ENCODE measurements at regions of chr17 and their contacts with region 1.

Region 1: GRCh38 chr17:2592971-2593820 is at the start of gene PAFAH1B1:
- DNase-seq: peak; percentile 77 to 95 (median 88)
- H3K4me3 ChIP-seq: peak within 1 kb of the TSS; percentile 65 to 100 (median 97)
- H3K27ac ChIP-seq: peak within 1 kb of the TSS; percentile 93 to 100 (median 99)
- H3K27me3 ChIP-seq: no peaks in the 10 kb centered on the region
- CTCF ChIP-seq: peak in 50 of 56 donors; percentile 16 to 73 (median 46)
- total RNA-seq, gene PAFAH1B1: 167 to 390 (median 327) TPM

Region 2: GRCh38 chr17:2401426-2402221 is 191.6 kb before region 1 on chr17:
- intact Hi-C with region 1: loop called (anchors 5 to 10 kb)
- DNase-seq: peak; percentile 100
- H3K4me3 ChIP-seq: peak overlapping the region; percentile 67 to 100 (median 96)
- H3K27ac ChIP-seq: peak overlapping the region; percentile 87 to 100 (median 97)
- H3K27me3 ChIP-seq: no peaks in the 10 kb centered on the region
- CTCF ChIP-seq: peak in 6 of 56 donors; percentile 5 to 29 (median 8)

Region 3: GRCh38 chr17:2484876-2485275 is 108.3 kb before region 1 on chr17:
- intact Hi-C with region 1: loop called (anchors 5 kb)
- DNase-seq: peak in 1 of 10 donors; percentile 5
- H3K4me3 ChIP-seq: no peak overlapping the region
- H3K27ac ChIP-seq: peak overlapping the region in 21 of 59 donors; percentile 8 to 96 (median 38)
- H3K27me3 ChIP-seq: no peaks in the 10 kb centered on the region
- CTCF ChIP-seq: no peak

Region 4: DNA sequence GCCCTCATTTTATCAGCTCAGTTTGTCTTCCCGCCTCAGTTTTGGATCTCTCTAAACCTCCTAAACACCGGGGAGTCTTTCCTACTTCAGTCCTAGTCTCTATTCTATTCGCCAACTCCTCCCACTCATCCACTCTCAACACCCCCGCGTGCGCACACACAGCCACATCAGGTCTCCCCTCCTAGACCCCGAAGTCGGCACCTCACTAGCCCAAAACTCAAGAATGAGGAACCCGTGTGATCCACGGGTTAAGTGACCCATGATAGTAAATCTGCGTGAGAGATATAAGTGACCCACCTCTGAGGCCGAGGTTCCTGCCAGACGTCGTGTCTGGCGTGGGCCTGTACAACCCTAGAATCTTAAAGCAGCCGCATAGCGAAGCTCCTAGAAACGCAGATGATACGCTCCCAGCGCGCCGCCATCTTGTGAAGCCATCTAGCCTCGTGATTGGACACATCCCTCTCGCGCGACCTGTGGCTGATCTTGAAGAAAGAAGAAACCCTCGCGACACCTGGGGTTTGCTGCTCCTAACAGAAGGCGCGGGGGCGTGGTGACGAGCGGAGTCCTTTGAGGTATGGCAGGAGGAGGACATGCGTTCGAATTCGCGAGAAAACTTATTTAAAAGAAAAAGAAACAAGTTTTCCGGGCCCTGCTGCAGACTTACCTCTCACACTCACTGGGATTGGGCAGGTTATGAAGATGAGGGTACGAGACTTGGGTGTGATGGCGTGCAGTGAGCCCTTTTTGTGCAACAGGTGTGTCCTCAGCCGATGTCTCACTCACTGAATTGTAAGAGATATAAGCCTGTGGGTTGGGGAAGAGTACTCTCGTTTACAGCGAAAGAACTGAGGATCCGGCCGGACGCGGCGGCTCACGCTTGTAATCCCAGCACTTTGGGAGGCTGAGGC is 81.5 kb before region 1 on chr17 and contains the start of gene METTL16:
- intact Hi-C with region 1: loop called in 1 of 2 experiments (anchors 5 kb)
- DNase-seq: peak; percentile 91 to 99 (median 96)
- H3K4me3 ChIP-seq: peak within 1 kb of the TSS; percentile 42 to 94 (median 80)
- H3K27ac ChIP-seq: peak within 1 kb of the TSS; percentile 76 to 98 (median 92)
- H3K27me3 ChIP-seq: no peaks in the 10 kb centered on the region
- CTCF ChIP-seq: peak in 35 of 56 donors; percentile 6 to 45 (median 25)
- total RNA-seq, gene METTL16: 19.6 to 52.4 (median 31.1) TPM

Region 5: DNA sequence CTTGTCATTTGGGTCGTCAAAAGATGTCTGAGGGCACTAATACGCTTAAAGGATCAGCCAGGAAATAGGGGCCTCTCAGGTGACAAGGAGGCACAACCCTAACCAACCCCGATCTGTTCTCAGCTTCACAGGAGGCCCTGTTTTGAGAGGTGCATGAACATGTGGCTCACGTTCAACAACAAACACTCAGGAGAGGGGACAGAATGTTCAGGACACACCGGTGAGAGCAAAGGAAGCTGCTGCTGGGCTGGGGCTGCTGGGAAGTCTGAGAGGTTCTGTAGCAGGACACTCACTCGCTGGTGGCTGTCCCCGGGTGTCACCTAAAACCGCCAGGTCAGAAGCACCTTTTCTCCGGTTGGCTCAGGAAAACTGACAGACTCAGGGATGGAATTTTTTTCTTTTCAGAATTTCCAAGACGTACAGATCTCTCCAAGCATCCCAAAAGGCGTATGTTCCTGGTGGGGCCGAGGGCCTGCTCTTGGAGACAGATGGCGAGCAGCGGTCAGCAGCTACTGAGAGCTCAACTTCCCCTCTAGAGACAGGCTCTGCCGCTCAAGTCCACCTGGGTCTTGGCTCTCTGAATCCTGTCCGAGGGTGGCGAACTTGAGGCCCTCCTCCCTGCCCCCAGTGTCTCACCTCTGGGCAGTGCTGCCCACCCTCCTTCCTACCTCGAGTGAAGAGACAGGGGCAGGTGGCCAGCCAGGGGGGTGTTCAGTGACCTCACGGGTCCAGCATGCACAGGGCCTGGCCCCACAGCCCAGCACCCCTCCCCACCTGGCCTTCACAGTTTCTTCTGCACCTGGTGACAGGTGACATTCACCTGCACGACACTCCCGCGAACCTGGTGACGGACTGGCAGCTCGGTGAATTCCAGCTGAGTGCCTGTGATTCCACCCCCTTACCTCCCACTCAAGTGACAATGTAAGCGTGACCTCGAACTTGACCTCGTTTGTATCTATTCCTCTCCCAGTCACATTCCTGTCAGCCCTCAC is 95.5 kb after region 1 on chr17:
- intact Hi-C with region 1: loop called in 1 of 2 experiments (anchors 5 kb)
- DNase-seq: peak in 3 of 10 donors; percentile 17 to 39 (median 26)
- H3K4me3 ChIP-seq: no peak overlapping the region
- H3K27ac ChIP-seq: peak overlapping the region in 41 of 59 donors; percentile 1 to 72 (median 34)
- H3K27me3 ChIP-seq: no peaks in the 10 kb centered on the region
- CTCF ChIP-seq: no peak

Region 6: DNA sequence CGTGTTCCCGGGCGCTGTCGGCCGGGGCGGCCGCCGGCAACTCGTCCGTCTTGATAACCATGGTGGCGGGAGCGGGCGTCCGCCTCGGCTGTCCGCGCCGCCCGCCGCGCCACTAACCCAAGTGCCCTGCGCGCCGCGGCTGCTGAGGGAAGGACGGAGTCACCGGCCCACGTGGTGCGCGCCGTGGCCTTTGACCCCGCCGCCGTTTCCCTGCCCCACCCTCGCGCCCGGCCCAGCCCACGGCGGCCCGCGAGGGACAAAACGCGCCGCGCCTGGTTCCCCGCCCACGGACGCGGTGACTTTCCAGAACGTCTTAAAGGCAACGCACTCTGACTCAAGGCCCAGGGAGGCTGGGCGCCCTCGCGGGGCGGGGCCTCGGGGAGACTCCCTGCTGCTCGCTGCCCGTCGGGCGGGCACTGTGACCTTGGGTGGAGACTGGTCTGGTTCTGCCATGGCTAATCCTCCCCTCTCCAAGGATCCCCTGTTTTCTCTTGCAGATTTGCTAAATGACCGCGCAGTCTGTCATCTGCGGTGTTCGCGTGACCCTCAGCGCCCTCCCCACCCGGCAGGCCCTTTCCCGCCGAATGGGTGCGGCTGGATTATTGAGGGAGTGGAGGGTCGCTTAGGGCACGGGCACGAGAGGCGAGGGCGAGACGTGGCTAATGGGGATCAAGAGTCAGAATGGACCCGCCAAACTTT is 118.6 kb after region 1 on chr17 and contains the start of gene CLUH:
- intact Hi-C with region 1: loop called in 1 of 2 experiments (anchors 5 kb)
- DNase-seq: peak; percentile 91 to 97 (median 94)
- H3K4me3 ChIP-seq: peak within 1 kb of the TSS; percentile 55 to 98 (median 89)
- H3K27ac ChIP-seq: peak within 1 kb of the TSS; percentile 35 to 96 (median 87)
- H3K27me3 ChIP-seq: no peaks in the 10 kb centered on the region
- CTCF ChIP-seq: peak in 41 of 56 donors; percentile 7 to 59 (median 36)
- total RNA-seq, gene CLUH: 46.1 to 95.4 (median 67.1) TPM

Measured in dorsolateral prefrontal cortex (tissue), 120 donors.